HepG2 (cell line): ENCODE measurements at regions of chr17 and their contacts with region 1.

Region 1: DNA sequence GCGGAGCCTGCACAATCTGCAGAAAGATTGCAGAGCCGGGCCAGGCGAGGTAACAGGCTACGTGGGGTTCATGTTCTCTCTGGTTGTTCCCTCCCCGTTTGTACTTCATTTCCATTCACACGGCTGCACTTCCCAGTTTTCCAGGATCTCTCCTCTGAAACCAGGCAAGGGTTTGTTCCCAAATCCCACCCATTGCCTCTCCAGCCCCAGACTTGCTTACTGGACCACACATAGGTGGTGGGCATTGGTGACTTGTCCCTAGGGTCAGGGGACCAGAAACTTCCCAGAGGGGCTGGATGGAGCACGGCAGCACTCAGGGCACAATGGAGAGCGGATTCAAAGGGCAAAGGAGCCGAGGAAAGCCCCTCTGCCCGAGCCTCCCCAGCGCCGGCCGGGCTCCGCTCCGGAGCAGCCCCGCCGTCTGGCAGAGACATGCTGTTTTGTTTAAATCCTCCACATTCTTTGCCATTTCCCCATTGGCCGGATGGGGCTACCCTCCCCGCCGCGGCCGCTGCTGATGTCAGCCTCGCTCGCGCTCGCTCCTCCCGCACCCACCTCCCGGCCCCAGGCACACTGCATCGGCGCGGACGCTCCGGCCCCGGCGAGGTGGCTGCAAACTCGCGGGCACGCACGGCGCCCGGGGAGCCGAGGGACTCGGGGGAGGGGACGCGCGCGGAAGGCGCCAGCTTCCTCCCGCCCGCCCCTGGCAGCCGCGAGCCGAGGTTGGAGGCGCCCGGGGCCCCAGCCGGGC is at the start of gene PITPNC1:
- DNase-seq: peak; percentile 76
- ATAC-seq: peak; percentile 76
- H3K4me3 ChIP-seq: peak within 1 kb of the TSS; percentile 87 to 90 (median 87)
- H3K27ac ChIP-seq: no peak within 1 kb of the TSS
- H3K4me1 ChIP-seq: peaks cover 39% of the 10 kb centered on the region
- H3K27me3 ChIP-seq: 0 out of 5 replicates have a peak, but pooled peaks cover 0 to 6% of the 10 kb centered on the region in 2 experiments
- CTCF ChIP-seq: peak; percentile 48
- EP300 ChIP-seq: no peak
- POLR2A ChIP-seq: no peak; a peak in 1 of 4 replicates
- RAD21 ChIP-seq: no peak
- total RNA-seq, gene PITPNC1: 3.7 and 4.1 TPM in 2 replicates

Region 2: GRCh38 chr17:67276075-67276474 is 100.8 kb before region 1 on chr17:
- CTCF ChIA-PET with region 1: no interaction called
- POLR2A ChIA-PET with region 1: no interaction called
- in situ Hi-C with region 1: no loop called
- intact Hi-C with region 1: no loop called
- DNase-seq: peak; percentile 51
- ATAC-seq: peak; percentile 55
- H3K4me3 ChIP-seq: no peak overlapping the region
- H3K27ac ChIP-seq: no peak overlapping the region
- H3K4me1 ChIP-seq: peaks cover 32% of the 10 kb centered on the region
- H3K27me3 ChIP-seq: no peaks in the 10 kb centered on the region
- CTCF ChIP-seq: peak; percentile 89
- EP300 ChIP-seq: no peak
- POLR2A ChIP-seq: no peak
- RAD21 ChIP-seq: peak; percentile 54

Region 3: DNA sequence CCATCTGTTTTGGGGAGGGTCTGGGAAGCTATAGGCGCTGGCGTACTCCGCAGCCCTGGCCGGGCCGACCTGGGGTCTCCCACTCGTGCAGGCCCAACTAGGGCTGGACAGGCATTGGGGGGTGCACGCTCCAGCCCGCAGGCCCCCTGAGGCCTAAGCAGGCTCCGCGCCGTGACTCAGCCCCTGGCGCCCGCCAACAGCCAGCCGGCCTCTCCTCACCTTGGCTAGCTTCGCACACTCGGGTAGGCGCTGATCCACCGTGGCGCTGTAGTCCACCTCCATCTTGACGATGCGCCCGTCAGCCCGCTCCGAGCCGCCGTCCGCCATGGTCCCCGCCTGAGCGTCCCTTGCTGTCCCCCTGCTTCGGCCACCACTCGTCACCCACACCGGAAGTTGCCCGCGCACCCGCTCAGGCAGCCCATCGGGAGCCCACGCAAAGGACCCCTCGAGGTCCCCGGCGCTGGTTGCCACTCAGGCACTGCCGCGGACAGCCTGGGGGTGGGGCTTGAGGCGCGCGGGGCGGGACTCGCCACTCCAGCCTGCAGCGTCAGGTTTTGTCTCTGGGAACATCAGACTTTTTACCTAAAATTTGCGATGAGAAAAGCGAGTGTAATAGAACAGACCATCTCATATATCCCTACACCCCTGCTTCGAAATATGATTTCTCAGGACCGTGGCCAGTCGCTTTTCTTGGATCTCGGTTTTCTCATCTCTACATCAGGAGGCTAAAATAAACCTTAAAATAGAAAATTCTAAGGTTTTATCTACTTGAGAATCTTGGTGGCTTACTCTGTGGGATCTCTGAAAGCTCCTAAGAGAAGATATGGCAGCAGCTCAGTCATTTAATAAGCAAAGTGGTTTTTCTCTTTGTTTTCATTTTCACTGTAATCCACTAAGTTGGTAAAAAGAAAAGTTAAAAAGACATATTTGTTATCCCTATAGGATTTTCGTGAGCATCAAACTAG is 10.4 kb before region 1 on chr17 and contains the start of gene PSMD12:
- CTCF ChIA-PET with region 1: interaction called, 3 read pairs
- POLR2A ChIA-PET with region 1: interaction called, 12 read pairs
- in situ Hi-C with region 1: no loop called
- intact Hi-C with region 1: loop called (anchors 1 kb)
- DNase-seq: peak; percentile 90
- ATAC-seq: peak; percentile 97
- H3K4me3 ChIP-seq: peak within 1 kb of the TSS; percentile 86 to 99 (median 90)
- H3K27ac ChIP-seq: peak within 1 kb of the TSS; percentile 82
- H3K4me1 ChIP-seq: peaks cover 50% of the 10 kb centered on the region
- H3K27me3 ChIP-seq: no peaks in the 10 kb centered on the region; a peak in 1 of 5 replicates
- CTCF ChIP-seq: peak; percentile 33; the same call in 1 of the 2 replicates
- EP300 ChIP-seq: peak; percentile 24 to 32; a peak in 1 of 4 replicates
- POLR2A ChIP-seq: peak; percentile 95 to 99
- RAD21 ChIP-seq: peak; percentile 36
- total RNA-seq, gene PSMD12: 71.7 and 115 TPM in 2 replicates

Region 4: GRCh38 chr17:67411397-67411796 is 34.5 kb after region 1 on chr17:
- CTCF ChIA-PET with region 1: no interaction called
- POLR2A ChIA-PET with region 1: no interaction called
- in situ Hi-C with region 1: no loop called
- intact Hi-C with region 1: no loop called
- DNase-seq: no peak
- ATAC-seq: no peak
- H3K4me3 ChIP-seq: no peak overlapping the region
- H3K27ac ChIP-seq: no peak overlapping the region
- H3K4me1 ChIP-seq: no peaks in the 10 kb centered on the region
- H3K27me3 ChIP-seq: no peaks in the 10 kb centered on the region
- CTCF ChIP-seq: no peak
- EP300 ChIP-seq: no peak
- POLR2A ChIP-seq: no peak
- RAD21 ChIP-seq: no peak

Region 5: DNA sequence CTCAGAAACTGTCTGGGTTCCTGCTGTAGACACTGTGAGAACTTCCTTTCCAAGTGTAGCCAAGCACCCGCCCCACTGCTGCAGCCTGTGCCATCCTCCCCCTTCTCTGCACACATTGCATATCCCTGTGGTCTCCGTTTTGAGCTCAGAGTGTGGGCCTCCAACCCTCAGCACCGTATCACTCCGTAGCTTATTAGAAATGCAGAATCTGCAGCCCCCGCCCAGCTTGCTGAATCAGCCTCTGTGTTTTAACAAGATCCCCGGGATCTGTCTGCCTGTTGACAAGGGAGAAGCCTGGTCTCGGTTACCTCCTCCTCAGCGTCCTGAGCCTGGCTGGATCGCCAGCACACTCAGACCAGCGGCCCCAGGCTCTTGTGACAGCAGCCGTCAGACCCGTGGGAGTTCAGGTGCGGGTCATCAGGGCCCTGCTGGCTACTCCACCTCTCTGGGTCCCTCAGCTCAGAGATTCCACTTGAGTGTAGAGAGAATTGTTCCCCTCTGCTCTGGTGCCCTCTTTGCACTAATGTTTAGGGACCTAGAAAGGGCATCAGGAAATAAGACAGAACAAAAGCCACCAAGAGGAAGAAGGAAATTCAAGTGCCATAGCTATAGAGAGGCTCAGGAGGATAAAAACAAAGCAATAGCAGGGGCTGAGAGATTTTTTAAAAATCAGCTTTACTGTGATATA is 92.4 kb after region 1 on chr17:
- CTCF ChIA-PET with region 1: interaction called, 21 read pairs
- POLR2A ChIA-PET with region 1: no interaction called
- in situ Hi-C with region 1: loop called (anchors 5 kb)
- intact Hi-C with region 1: no loop called
- DNase-seq: peak; percentile 36
- ATAC-seq: peak; percentile 93
- H3K4me3 ChIP-seq: peak overlapping the region; percentile 9 to 34 (median 25); a peak in 5 of 6 replicates
- H3K27ac ChIP-seq: no peak overlapping the region
- H3K4me1 ChIP-seq: no peaks in the 10 kb centered on the region
- H3K27me3 ChIP-seq: no peaks in the 10 kb centered on the region
- CTCF ChIP-seq: no peak
- EP300 ChIP-seq: no peak
- POLR2A ChIP-seq: no peak
- RAD21 ChIP-seq: no peak

Region 6: DNA sequence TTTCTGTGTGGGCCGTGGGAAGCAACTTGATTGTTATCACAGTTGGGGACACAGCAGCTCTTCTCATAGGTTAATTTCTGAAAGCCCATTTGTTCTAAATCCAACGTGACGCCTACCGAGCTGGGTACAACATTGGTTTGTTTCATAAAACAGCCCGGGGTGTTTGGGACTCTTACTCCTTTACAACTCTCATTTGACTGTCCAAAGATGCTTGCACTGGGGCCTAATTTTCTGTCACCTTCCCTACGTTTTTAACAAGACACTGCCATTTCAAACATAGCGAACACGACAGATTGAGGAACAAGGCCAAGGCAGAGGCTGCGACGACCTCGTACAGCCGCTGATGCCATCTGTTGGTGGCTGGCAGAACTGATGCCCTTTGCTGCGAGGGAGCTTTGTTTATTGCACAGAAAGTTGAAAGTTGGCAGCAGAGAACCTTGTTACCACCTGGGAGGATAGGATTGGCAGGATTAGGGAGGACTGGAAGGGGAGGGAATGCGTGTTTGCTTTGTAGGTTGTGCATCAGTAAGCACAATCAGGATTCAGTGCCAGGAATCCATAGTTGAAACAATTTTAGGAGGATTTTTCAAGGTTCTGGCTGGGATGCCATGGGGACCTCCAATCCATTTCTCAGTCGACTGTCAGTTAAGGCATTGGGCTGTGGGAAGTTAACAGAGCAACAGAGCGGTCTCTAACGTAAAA is 98.5 kb after region 1 on chr17:
- CTCF ChIA-PET with region 1: interaction called, 21 read pairs
- POLR2A ChIA-PET with region 1: interaction called, 4 read pairs
- in situ Hi-C with region 1: no loop called
- intact Hi-C with region 1: loop called (anchors 1 kb)
- DNase-seq: peak; percentile 50
- ATAC-seq: peak; percentile 89
- H3K4me3 ChIP-seq: no peak overlapping the region
- H3K27ac ChIP-seq: no peak overlapping the region
- H3K4me1 ChIP-seq: peaks cover 9% of the 10 kb centered on the region; the same call in 1 of the 2 replicates
- H3K27me3 ChIP-seq: no peaks in the 10 kb centered on the region
- CTCF ChIP-seq: peak; percentile 94
- EP300 ChIP-seq: no peak
- POLR2A ChIP-seq: no peak
- RAD21 ChIP-seq: peak; percentile 82

Region 7: DNA sequence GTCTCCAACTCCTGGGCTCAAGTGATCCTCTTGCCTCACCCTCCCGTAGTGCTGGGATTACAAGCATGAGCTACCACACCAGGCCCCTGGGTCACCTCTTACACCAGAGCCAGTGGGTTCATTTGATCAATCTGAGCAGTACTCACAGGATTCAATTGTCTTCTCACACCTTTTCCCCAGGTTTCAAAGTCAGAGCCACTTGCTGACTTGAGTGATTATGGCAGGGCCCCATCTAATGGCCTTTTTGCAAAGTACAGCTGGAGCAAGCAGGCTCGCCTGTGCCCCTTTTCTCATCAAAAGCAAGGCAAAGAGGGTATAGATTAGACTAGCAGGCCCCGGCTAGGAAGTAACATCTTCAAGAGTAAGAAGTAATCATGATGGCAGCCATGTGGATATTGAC is 226.0 kb after region 1 on chr17:
- CTCF ChIA-PET with region 1: interaction called, 12 read pairs
- POLR2A ChIA-PET with region 1: no interaction called
- in situ Hi-C with region 1: loop called (anchors 10 kb)
- intact Hi-C with region 1: no loop called
- DNase-seq: peak; percentile 71
- ATAC-seq: peak; percentile 90
- H3K4me3 ChIP-seq: no peak overlapping the region
- H3K27ac ChIP-seq: no peak overlapping the region
- H3K4me1 ChIP-seq: peaks cover 11% of the 10 kb centered on the region
- H3K27me3 ChIP-seq: no peaks in the 10 kb centered on the region
- CTCF ChIP-seq: peak; percentile 76
- EP300 ChIP-seq: no peak
- POLR2A ChIP-seq: no peak
- RAD21 ChIP-seq: peak; percentile 71

Region 8: DNA sequence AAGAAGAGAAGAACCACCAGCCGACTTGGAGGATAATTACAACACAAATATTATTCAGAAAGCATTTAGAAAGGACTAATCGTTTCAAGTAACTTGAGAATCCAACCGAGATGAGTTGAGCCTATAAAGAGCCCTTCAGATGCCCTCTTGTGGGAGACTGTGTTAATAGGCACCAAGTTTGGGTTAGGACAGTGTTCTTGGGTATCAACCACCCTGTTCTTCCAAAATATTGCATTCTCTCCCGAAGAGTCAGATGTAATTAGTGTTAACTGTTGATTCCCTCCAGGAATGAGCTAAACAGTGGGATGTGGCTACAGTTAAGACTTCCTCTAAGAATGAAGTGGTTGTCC is 253.0 kb after region 1 on chr17:
- CTCF ChIA-PET with region 1: interaction called, 13 read pairs
- POLR2A ChIA-PET with region 1: no interaction called
- in situ Hi-C with region 1: no loop called
- intact Hi-C with region 1: loop called (anchors 5 kb)
- DNase-seq: peak; percentile 24
- ATAC-seq: peak; percentile 20; the same call in 1 of the 3 replicates
- H3K4me3 ChIP-seq: no peak overlapping the region
- H3K27ac ChIP-seq: no peak overlapping the region
- H3K4me1 ChIP-seq: peaks cover 17% of the 10 kb centered on the region; the same call in 1 of the 2 replicates
- H3K27me3 ChIP-seq: no peaks in the 10 kb centered on the region
- CTCF ChIP-seq: peak; percentile 47
- EP300 ChIP-seq: no peak
- POLR2A ChIP-seq: no peak
- RAD21 ChIP-seq: no peak

Region 9: GRCh38 chr17:67689534-67690177 is 312.7 kb after region 1 on chr17:
- CTCF ChIA-PET with region 1: interaction called, 17 read pairs
- POLR2A ChIA-PET with region 1: no interaction called
- in situ Hi-C with region 1: loop called (anchors 5 kb)
- intact Hi-C with region 1: loop called (anchors 1 kb)
- DNase-seq: peak; percentile 58
- ATAC-seq: no peak
- H3K4me3 ChIP-seq: no peak overlapping the region
- H3K27ac ChIP-seq: no peak overlapping the region
- H3K4me1 ChIP-seq: no peaks in the 10 kb centered on the region
- H3K27me3 ChIP-seq: peaks cover 0 to 7% of the 10 kb centered on the region in 2 experiments; a peak in 1 of 5 replicates
- CTCF ChIP-seq: peak; percentile 77
- EP300 ChIP-seq: no peak
- POLR2A ChIP-seq: no peak
- RAD21 ChIP-seq: 0 out of 2 replicates have a peak, but pooled peaks have one; percentile 32